ENCODE measurements at regions of chrX and their contacts with region 1.

Region 1: DNA sequence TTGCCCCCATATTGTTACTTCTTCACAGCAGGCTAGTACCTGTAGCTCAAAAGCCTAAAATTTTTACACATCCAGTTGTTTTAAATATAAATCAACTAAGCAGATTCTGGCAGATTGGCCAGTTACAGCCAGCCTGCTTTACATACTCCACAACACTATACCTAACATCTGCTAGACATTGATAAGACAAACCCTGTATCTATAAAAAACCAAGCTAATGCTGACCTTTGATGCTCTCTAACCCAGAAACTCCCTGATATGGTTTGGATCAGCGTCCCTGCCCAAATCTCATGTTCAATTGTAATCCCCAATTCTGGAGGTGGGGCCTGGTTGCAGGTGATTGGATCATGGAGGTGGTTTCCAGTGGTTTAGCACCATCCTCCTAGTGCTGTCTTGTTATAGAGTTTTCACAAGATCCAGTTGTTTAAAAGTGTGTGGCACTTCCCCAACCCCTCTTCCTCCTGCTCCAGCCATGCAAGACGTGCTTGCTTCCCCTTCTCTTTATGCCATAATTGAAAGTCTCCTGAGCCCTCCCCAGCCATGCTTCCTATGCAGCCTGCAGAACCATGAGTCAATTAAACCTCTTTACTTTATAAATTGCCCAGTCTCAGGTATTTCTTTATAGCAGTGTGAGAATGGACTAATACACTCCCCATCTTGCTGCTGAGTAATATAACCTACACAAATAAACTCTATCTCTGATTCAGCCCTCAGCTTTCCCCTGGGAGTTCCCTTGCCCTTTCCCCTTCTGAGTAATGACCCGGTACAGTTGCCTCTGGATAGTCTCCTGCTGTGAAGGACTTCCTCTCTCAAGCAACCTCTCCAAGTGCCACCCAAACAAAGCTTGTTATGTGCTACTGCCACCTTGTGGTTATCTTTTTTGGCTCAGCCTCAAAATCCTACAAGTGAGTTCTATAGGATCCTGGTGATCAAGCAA is 39.6 kb downstream of the ZCCHC13 start:
- DNase-seq: peak; percentile 65
- H3K4me3 Mint-ChIP-seq: no peak overlapping the region
- H3K27ac Mint-ChIP-seq: peak overlapping the region; percentile 6
- H3K4me1 Mint-ChIP-seq: peaks cover 23% of the 10 kb centered on the region
- H3K27me3 Mint-ChIP-seq: no peaks in the 10 kb centered on the region
- CTCF ChIP-seq: peak; percentile 35

Region 2: DNA sequence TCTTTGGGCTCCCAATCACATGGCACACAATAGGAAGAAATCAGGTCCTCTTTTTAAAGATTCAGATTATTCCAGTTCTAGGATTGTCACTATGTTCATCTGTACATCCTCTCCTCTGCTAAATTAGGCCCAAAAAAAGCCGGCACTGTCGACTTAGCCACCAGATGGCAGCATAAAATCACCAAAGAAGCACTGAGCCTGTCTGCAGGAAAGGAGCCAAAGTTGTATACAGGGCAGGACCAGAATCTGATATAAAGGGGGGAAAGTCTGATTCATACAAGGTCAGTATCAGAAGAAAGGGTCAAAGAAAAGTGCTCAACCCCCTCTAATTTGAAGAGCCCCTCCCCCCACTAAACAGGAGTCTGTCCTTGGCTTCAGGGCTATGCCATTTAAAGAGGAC is 488.1 kb before region 1 on chrX:
- CTCF ChIA-PET with region 1: interaction called, 3 read pairs
- intact Hi-C with region 1: loop called (anchors 1 kb)
- DNase-seq: peak; percentile 58
- H3K4me3 Mint-ChIP-seq: no peak overlapping the region
- H3K27ac Mint-ChIP-seq: no peak overlapping the region
- H3K4me1 Mint-ChIP-seq: no peaks in the 10 kb centered on the region
- H3K27me3 Mint-ChIP-seq: no peaks in the 10 kb centered on the region
- CTCF ChIP-seq: peak; percentile 59

Region 3: DNA sequence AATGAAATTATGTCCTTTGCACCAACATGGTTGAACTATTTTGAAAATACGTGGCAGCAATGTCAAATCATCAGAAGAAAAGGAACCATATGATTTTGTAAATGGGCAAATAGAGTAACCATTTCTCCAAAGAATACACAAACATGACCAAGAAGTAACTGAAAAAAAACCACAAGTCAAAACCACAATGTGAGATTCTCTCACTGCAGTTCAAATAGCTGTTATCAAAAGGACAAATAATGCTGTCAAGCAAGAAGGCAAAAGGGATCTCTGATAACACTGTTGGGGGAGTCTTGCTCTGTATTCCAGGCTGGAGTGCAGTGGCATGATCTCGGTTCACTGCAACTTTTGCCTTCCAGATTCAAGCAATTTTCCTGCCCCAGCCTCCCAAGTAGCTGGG is 320.4 kb before region 1 on chrX:
- CTCF ChIA-PET with region 1: no interaction called
- intact Hi-C with region 1: loop called (anchors 2 kb)
- DNase-seq: no peak
- H3K4me3 Mint-ChIP-seq: no peak overlapping the region
- H3K27ac Mint-ChIP-seq: no peak overlapping the region
- H3K4me1 Mint-ChIP-seq: peaks cover 12% of the 10 kb centered on the region
- H3K27me3 Mint-ChIP-seq: no peaks in the 10 kb centered on the region
- CTCF ChIP-seq: no peak

Region 4: DNA sequence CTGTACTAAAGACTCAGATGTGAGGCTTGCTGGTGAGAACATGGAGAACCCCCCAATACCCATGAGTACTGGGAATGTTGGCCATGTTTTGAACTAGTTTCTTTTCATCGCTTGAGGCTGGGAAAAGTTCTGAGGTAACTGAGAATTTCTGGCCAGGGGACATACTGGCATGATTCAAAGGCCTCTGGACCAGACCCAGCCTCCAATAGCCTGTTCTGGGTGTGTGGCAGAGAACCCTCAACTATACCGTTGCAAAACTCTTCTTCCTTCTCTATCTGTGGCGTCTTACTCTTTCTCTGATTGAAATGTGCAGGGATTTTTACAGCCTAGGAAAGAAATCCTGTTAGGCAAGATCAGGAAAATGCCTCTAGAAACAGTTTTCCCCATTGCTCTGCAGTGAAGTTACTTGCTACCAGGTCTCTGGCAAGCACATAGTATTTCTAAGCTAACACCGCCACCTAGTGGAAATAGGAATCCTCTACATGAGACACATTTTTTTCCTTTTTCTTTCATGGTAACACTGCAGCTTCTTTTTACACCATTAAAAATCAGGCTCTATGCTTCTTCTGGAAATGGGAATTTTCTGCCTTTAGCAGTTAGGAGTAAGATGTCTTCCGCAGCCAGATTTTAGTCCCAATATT is 210.3 kb before region 1 on chrX:
- CTCF ChIA-PET with region 1: no interaction called
- intact Hi-C with region 1: loop called (anchors 10 kb)
- DNase-seq: peak; percentile 30
- H3K4me3 Mint-ChIP-seq: no peak overlapping the region
- H3K27ac Mint-ChIP-seq: no peak overlapping the region
- H3K4me1 Mint-ChIP-seq: no peaks in the 10 kb centered on the region
- H3K27me3 Mint-ChIP-seq: no peaks in the 10 kb centered on the region
- CTCF ChIP-seq: peak; percentile 51

Region 5: GRCh38 chrX:74232859-74233258 is 110.8 kb before region 1 on chrX:
- CTCF ChIA-PET with region 1: no interaction called
- intact Hi-C with region 1: loop called (anchors 5 kb)
- DNase-seq: peak; percentile 32
- H3K4me3 Mint-ChIP-seq: no peak overlapping the region
- H3K27ac Mint-ChIP-seq: no peak overlapping the region
- H3K4me1 Mint-ChIP-seq: peaks cover 7% of the 10 kb centered on the region
- H3K27me3 Mint-ChIP-seq: no peaks in the 10 kb centered on the region
- CTCF ChIP-seq: no peak

Region 6: DNA sequence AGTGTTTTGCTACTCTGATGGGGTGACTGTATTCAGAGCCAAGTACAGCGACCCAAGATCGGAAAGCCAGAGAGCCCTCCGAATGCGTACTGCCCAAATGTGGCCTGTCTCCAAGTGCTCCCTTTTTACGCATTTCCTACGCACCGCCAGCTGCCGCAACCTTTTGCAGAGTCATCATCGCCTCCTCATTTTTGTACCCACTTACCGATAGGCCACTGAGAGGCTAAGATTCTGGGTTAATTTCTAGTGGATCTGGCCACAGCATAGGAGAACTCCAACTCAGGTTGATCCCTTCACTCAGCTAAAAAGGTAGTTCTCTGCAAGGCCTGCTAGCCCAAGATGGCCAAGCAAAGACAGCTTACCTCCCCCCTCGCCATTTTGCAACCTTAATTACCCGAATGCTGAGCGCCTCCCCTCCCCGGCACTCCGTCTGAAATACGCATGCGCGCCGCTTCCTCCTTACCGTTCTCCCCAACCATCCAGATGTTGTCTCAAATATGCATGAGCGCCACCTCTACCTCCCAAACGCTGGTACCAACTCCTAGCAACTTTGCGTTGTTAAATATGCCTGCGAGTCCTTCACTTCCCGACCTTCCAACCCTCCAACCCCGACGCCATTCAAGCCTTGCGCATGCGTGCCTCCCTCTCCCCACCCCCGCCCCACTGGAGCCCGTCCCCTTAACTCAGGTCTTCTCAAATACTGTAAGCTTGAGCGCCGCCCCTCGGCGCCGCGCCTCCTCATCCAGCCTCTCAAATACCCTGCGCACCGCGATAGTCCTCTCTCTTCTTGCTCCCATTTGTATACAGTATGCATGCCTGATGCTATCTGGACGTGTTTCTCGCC is 51.4 kb before region 1 on chrX:
- CTCF ChIA-PET with region 1: interaction called, 10 read pairs
- intact Hi-C with region 1: loop called (anchors 1 kb)
- DNase-seq: peak; percentile 80
- H3K4me3 Mint-ChIP-seq: peak overlapping the region; percentile 95
- H3K27ac Mint-ChIP-seq: peak overlapping the region; percentile 99
- H3K4me1 Mint-ChIP-seq: no peaks in the 10 kb centered on the region
- H3K27me3 Mint-ChIP-seq: no peaks in the 10 kb centered on the region
- CTCF ChIP-seq: no peak

Region 7: GRCh38 chrX:74363914-74364313 is 20.3 kb after region 1 on chrX:
- CTCF ChIA-PET with region 1: interaction called, 12 read pairs
- intact Hi-C with region 1: no loop called
- DNase-seq: no peak
- H3K4me3 Mint-ChIP-seq: no peak overlapping the region
- H3K27ac Mint-ChIP-seq: no peak overlapping the region
- H3K4me1 Mint-ChIP-seq: no peaks in the 10 kb centered on the region
- H3K27me3 Mint-ChIP-seq: no peaks in the 10 kb centered on the region
- CTCF ChIP-seq: no peak

Measured in Calu3 (cell line).